SK-N-SH (cell line): ENCODE measurements at regions of chr4 and their contacts with region 1.

Region 1: DNA sequence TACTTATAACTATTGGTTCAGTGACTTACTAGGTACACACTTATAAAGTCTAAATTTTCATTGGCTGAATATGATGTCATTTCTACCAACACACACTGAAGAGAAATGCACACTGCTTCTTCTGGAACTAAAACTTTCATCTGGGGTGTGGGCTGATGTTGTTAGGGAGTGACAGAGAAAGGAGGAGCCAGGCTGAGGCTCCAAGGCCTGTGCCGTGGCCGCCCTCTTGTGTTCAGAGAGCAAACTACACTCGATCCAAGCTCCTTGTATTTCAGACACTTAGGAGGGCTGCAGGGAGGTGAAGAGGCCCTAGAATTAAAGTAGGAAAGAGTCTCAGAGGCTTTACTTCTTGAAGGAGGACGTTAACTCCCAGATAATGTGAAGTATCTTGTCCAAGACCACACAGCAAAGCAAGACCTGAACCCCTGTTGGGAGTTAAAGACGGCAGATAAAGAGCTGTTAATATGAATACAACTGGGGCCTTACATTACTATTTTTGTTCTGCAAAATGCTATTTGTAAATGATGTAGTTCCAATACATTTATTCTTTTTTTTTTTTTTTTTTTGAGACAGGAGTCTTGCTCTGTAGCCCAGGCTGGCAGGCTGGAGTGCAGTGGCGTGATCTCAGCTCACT is 137.5 kb downstream of the AFAP1 start:
- DNase-seq: peak; percentile 80
- H3K4me3 ChIP-seq: no peak overlapping the region; a peak in 1 of 4 replicates
- H3K27ac ChIP-seq: peak overlapping the region; percentile 19 to 67
- H3K4me1 ChIP-seq: peaks cover 20 to 30% of the 10 kb centered on the region in 2 experiments
- H3K27me3 ChIP-seq: no peaks in the 10 kb centered on the region
- CTCF ChIP-seq: peak; percentile 89
- EP300 ChIP-seq: no peak
- RAD21 ChIP-seq: peak; percentile 94

Region 2: GRCh38 chr4:7067452-7068278 is 734.5 kb before region 1 on chr4 and contains the start of gene GRPEL1:
- CTCF ChIA-PET with region 1: no interaction called
- POLR2A ChIA-PET with region 1: no interaction called
- DNase-seq: peak; percentile 99
- H3K4me3 ChIP-seq: peak within 1 kb of the TSS; percentile 86 to 91
- H3K27ac ChIP-seq: peak within 1 kb of the TSS; percentile 72 to 80
- H3K4me1 ChIP-seq: peaks cover 0 to 17% of the 10 kb centered on the region in 2 experiments; a peak in 2 of 4 replicates
- H3K27me3 ChIP-seq: no peaks in the 10 kb centered on the region
- CTCF ChIP-seq: no peak
- EP300 ChIP-seq: no peak
- RAD21 ChIP-seq: no peak
- polyA plus RNA-seq, gene GRPEL1: 29.8 and 32.8 TPM in 2 replicates

Region 3: GRCh38 chr4:7770224-7771050 is 31.8 kb before region 1 on chr4:
- CTCF ChIA-PET with region 1: interaction called, 137 read pairs
- POLR2A ChIA-PET with region 1: no interaction called
- DNase-seq: peak; percentile 73
- H3K4me3 ChIP-seq: no peak overlapping the region
- H3K27ac ChIP-seq: peak overlapping the region in 1 of 2 experiments; percentile 25; a peak in 1 of 4 replicates
- H3K4me1 ChIP-seq: peaks cover 0 to 27% of the 10 kb centered on the region in 2 experiments; a peak in 1 of 4 replicates
- H3K27me3 ChIP-seq: no peaks in the 10 kb centered on the region
- CTCF ChIP-seq: peak; percentile 63
- EP300 ChIP-seq: no peak
- RAD21 ChIP-seq: peak; percentile 69

Region 4: GRCh38 chr4:7843831-7844593 is 41.8 kb after region 1 on chr4:
- CTCF ChIA-PET with region 1: interaction called, 73 read pairs
- POLR2A ChIA-PET with region 1: no interaction called
- DNase-seq: peak; percentile 73
- H3K4me3 ChIP-seq: no peak overlapping the region; a peak in 1 of 4 replicates
- H3K27ac ChIP-seq: peak overlapping the region; percentile 86 to 100
- H3K4me1 ChIP-seq: peaks cover 26 to 54% of the 10 kb centered on the region in 2 experiments
- H3K27me3 ChIP-seq: no peaks in the 10 kb centered on the region
- CTCF ChIP-seq: peak; percentile 68
- EP300 ChIP-seq: no peak
- RAD21 ChIP-seq: peak; percentile 62

Region 5: DNA sequence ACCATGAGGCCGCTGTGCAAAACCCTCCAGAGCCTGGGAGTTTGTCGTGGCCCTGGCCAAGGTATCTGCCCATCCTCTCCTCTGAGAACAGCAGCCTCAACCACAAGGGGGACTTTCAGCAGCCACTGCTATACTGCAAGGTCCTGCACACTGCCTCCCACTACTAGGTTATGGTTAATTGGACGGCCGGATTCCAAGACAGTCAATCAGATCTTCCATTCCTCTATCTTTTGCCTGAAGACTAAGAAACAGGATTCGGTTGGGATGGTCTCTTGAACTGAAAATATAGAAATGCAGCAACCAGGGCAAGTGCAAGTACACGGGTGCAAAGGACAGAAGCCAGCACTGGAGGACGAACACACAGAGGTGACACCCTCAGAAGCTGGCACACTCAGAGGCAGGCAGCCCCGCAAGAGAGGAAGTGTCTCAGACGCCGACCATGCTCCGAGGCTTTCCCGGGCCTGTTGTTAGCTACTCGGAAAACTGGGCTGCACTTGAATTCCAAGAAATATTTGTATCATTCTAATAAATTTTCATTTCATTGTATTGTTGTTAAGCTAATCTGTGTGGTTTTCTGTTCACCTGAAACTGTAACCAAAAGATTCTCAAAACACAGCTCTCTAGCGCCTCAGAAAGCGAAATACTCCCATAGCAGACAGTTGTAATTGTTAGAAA is 74.1 kb after region 1 on chr4:
- CTCF ChIA-PET with region 1: interaction called, 44 read pairs
- POLR2A ChIA-PET with region 1: no interaction called
- DNase-seq: peak; percentile 54
- H3K4me3 ChIP-seq: peak overlapping the region; percentile 13 to 15; a peak in 2 of 4 replicates
- H3K27ac ChIP-seq: peak overlapping the region; percentile 91 to 93
- H3K4me1 ChIP-seq: peaks cover 57 to 71% of the 10 kb centered on the region in 2 experiments
- H3K27me3 ChIP-seq: no peaks in the 10 kb centered on the region
- CTCF ChIP-seq: peak; percentile 61
- EP300 ChIP-seq: no peak
- RAD21 ChIP-seq: peak; percentile 50

Region 6: DNA sequence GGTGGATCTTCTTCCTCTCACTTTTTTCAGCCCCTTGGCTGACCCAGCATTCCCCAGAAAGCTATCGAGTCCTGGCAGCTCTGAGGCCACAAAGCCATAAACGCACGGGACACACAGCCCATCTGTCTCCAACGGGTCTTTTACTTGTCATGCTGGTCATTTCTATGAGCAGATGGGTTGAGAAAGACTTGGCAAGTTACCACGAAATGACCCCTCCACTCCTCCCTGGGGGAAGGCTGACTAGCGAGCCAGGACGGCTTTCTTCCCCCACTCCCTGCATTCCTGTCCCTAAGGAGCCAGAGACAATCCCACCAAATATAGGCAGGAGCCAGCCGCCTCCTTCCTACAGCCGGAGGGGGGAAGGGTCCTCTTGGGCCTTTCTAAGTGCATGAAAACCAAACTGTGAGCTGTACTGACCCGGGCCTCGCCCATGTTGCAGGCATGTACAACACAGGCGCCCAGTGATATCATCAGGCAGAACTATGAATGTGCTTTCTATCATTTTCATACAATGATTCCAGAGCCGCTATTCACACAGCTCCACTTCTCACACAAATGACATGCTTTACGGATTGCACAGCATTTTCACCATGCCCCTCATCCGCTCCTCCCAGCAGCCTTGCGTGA is 108.9 kb after region 1 on chr4:
- CTCF ChIA-PET with region 1: interaction called, 46 read pairs
- POLR2A ChIA-PET with region 1: interaction called, 3 read pairs
- DNase-seq: peak; percentile 67
- H3K4me3 ChIP-seq: 0 out of 4 replicates have a peak overlapping the region, but pooled peaks of 1 of the 2 experiments have one; percentile 7
- H3K27ac ChIP-seq: peak overlapping the region; percentile 96 to 97
- H3K4me1 ChIP-seq: peaks cover 58 to 69% of the 10 kb centered on the region in 2 experiments
- H3K27me3 ChIP-seq: no peaks in the 10 kb centered on the region
- CTCF ChIP-seq: no peak
- EP300 ChIP-seq: no peak
- RAD21 ChIP-seq: no peak

Region 7: DNA sequence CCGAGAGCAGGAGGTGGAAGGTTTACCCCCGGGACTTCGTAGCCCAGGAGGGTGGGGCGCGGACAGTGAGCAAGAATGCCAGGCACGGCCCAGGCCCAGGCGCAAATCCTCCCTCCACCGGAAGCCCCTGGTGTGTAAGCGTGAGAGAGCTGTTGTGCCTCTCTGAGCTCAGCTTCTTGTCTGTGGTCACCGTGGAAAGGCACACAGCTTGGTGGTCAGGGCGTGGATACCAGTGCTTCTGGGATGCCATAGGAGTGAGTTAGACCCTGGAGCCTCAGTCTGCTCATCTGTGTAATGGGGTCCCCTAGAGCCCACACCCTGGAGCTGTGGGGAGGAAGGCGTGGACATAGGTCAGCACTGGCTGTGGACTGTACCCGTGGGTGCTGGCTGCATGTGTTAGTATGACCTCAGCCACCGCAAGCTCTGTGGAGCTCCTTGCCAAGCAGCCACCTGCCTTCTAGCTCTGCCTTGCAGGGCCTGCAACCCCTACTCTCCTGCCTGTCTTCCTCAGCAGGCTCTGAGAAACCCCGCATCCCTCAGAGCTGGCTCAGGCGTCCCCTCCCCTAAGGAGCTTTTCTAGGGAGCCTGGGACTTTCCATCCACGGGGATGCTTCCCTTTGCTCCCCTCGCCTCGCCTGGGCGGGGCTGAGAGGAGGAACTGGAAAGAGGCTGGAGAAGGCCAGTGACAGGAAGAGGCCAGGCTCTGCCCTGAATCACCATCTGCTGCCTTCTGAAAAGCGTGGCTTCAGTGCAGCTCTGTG is 165.5 kb after region 1 on chr4:
- CTCF ChIA-PET with region 1: interaction called, 11 read pairs
- POLR2A ChIA-PET with region 1: no interaction called
- DNase-seq: no peak
- H3K4me3 ChIP-seq: no peak overlapping the region
- H3K27ac ChIP-seq: no peak overlapping the region
- H3K4me1 ChIP-seq: peaks cover 27 to 37% of the 10 kb centered on the region in 2 experiments; a peak in 3 of 4 replicates
- H3K27me3 ChIP-seq: no peaks in the 10 kb centered on the region
- CTCF ChIP-seq: no peak
- EP300 ChIP-seq: no peak
- RAD21 ChIP-seq: no peak

Region 8: DNA sequence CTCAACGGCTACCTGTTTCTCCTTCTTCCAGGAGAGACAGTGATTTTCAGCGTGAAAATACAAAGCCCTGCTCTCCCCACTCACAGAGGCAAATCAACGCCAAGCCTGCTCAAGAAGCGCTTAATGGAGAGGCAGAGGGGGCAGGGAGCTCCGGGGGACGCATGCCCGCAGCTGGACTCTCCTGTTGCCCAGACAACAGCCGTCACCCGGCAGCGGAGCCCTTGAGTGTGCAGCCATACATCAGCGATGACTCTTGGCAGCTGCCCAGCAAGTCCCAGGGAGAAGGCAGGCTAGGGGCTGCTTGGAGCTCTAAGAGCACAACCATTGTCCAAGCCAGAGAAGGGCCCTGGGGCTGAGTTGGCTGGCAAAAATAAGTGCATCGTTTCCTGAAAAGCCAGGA is 208.4 kb after region 1 on chr4:
- CTCF ChIA-PET with region 1: interaction called, 10 read pairs
- POLR2A ChIA-PET with region 1: no interaction called
- DNase-seq: peak; percentile 96
- H3K4me3 ChIP-seq: peak overlapping the region in 1 of 2 experiments; percentile 29; a peak in 1 of 4 replicates
- H3K27ac ChIP-seq: peak overlapping the region in 1 of 2 experiments; percentile 97; a peak in 2 of 4 replicates
- H3K4me1 ChIP-seq: peaks cover 9 to 36% of the 10 kb centered on the region in 2 experiments; a peak in 3 of 4 replicates
- H3K27me3 ChIP-seq: no peaks in the 10 kb centered on the region
- CTCF ChIP-seq: no peak
- EP300 ChIP-seq: peak in 1 of 2 experiments; percentile 64; a peak in 1 of 4 replicates
- RAD21 ChIP-seq: no peak; the same call in 1 of the 2 replicates